ENCODE measurements at regions of chr5 and their contacts with region 1.

Region 1: DNA sequence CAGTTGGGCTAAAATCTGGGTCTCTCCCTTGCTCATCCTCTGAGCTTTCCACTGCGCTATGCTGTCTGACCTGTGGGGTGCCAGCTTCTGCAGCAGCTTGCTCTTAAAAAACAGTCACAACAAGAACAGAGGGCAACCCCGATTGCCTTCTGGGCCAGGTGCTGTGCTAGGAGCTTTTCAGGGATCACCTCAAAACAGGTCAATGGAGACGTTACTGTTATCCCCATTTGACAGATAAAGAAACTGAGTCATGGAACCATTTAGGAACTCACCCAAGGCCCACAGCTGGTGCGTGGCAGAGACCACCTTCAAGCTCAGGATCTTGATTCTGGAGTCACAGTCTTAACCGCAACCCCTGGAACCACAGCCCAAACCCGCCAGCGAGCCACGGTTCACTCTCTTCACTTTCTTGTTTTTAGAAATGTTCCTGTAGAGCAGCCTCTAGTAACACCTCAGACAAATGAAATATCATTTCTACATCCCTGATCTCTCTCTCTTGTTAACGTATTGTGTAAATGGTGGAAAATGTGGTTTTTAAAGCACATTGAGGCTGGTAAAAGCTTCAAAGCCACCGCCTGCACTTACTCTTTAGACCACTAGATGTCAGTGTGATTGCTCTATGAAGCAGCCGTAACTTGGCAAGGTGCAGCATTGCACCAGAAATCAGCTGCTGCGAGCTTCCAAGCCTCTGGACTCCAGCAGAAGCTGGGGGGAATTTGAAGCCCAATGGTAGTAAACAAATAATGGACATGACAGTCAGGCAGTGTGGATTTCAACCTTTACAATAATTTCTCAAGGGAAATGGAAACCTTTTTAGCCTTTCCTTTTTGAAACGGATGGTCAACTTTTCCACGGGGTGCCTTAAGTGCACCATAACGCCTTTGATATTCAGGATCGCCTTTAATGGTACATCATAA is 1.7 kb downstream of the FYB1 start:
- DNase-seq: peak; percentile 79
- H3K4me3 Mint-ChIP-seq: peak overlapping the region; percentile 74
- H3K27ac Mint-ChIP-seq: peak overlapping the region; percentile 78
- H3K4me1 Mint-ChIP-seq: peaks cover 57% of the 10 kb centered on the region
- H3K27me3 Mint-ChIP-seq: no peaks in the 10 kb centered on the region

Region 2: GRCh38 chr5:38776149-38776896 is 441.3 kb before region 1 on chr5:
- CTCF ChIA-PET with region 1: no interaction called
- POLR2A ChIA-PET with region 1: no interaction called
- DNase-seq: no peak
- H3K4me3 Mint-ChIP-seq: no peak overlapping the region
- H3K27ac Mint-ChIP-seq: no peak overlapping the region
- H3K4me1 Mint-ChIP-seq: no peaks in the 10 kb centered on the region
- H3K27me3 Mint-ChIP-seq: peaks cover 6% of the 10 kb centered on the region

Region 3: DNA sequence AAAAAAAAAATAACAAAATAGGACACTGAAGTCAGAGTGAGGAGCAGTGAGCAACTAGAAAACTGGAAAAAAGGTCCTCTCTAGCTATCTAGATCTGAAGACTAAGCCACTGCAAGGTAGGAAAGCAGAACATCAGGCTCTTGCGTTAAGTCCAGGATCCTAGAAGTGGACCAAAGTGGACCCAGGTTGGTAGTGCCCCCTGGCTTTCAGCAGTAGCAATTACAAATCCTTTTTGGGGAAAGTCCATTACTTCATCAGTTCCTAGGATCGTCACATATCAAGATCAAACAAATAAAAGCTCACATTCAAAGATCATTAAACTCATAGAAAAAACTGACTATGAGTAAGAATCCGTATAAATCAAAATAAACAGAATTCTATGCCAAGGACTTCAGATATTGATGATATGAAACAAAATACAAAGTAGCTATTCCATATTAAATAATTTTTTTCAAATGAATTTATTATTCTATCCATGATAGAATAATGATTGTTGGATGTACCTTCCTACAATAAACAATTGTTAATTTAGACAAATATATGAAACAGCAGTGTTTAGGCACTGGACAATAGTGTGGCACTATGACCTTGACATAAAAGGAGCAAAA is 136.9 kb before region 1 on chr5:
- CTCF ChIA-PET with region 1: interaction called, 12 read pairs
- POLR2A ChIA-PET with region 1: interaction called, 31 read pairs
- DNase-seq: peak; percentile 46
- H3K4me3 Mint-ChIP-seq: no peak overlapping the region
- H3K27ac Mint-ChIP-seq: no peak overlapping the region
- H3K4me1 Mint-ChIP-seq: peaks cover 25% of the 10 kb centered on the region
- H3K27me3 Mint-ChIP-seq: peaks cover 33% of the 10 kb centered on the region

Region 4: DNA sequence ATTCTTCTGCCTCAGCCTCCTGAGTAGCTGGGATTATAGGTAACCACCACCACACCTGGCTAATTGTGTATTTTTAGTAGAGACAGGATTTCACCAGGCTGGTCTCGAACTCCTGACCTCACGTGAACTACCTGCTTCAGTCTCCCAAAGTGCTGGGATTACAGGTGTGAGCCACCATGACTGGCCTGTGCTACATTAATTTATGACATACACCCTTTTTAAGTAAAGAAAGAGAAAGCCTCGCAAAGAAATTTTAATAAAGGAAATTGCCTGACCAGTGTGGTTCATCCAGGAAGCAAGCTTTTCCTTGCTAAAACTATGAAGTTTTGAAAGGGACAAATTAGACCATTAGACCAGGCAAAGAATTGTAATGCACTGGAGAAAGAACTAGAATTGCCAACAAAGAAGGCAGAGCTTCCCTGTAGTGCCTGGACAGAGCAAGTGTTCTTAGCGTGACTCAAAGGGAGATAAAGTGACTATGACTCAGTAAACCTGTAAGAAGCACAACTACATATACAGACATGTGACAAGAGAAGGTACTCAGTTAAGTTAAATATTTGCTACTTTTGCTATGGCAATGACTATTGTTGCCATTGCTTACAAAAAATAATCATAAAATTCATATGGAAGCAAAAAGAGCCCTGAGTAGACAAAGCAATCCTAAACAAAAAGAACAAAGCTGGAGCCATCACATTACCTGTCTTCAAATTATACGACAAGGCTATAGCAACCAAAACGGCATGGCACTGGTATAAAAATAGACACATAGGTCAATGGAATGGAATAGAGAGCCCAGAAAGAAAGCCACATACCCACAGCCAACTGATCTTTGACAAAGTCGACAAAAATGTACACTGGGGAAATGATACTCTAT is 52.9 kb before region 1 on chr5:
- CTCF ChIA-PET with region 1: interaction called, 27 read pairs
- POLR2A ChIA-PET with region 1: interaction called, 36 read pairs
- DNase-seq: no peak
- H3K4me3 Mint-ChIP-seq: peak overlapping the region; percentile 60
- H3K27ac Mint-ChIP-seq: peak overlapping the region; percentile 79
- H3K4me1 Mint-ChIP-seq: peaks cover 85% of the 10 kb centered on the region
- H3K27me3 Mint-ChIP-seq: no peaks in the 10 kb centered on the region

Region 5: DNA sequence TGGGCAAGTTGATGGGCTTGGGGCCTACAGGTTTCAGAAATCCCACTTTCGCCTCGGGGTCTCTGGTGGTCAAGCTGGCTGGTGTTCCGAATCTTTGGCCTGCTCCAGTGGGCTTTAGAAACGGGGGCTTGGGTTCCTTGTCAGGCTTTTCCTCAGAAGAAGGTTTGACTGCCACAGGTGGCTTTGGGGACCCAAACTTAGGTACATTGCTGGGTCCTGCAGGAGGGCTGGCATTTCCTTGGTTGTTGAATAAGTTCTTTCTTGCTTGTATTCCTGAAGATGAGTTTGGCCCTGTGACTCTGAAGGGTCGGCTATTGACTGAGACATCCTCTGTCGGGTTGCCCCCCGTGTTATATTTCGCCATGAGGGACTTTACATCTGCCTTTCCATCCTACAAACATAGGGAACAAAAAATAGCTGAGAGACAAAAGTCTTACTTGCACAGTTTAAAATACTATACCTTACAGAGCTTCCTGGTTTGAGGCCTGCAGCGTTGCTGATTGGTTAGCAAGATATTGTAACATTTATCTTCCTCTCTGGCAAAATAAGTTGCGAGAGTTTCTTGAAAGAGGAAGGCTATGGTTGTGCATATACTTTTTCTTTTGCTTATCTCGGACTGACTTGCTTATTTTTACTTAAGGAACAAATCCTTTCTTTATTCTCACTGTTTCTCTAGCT is 14.9 kb before region 1 on chr5:
- CTCF ChIA-PET with region 1: interaction called, 37 read pairs
- POLR2A ChIA-PET with region 1: interaction called, 238 read pairs
- DNase-seq: peak; percentile 62
- H3K4me3 Mint-ChIP-seq: peak overlapping the region; percentile 96
- H3K27ac Mint-ChIP-seq: peak overlapping the region; percentile 97
- H3K4me1 Mint-ChIP-seq: peaks cover 40% of the 10 kb centered on the region
- H3K27me3 Mint-ChIP-seq: no peaks in the 10 kb centered on the region

Region 6: DNA sequence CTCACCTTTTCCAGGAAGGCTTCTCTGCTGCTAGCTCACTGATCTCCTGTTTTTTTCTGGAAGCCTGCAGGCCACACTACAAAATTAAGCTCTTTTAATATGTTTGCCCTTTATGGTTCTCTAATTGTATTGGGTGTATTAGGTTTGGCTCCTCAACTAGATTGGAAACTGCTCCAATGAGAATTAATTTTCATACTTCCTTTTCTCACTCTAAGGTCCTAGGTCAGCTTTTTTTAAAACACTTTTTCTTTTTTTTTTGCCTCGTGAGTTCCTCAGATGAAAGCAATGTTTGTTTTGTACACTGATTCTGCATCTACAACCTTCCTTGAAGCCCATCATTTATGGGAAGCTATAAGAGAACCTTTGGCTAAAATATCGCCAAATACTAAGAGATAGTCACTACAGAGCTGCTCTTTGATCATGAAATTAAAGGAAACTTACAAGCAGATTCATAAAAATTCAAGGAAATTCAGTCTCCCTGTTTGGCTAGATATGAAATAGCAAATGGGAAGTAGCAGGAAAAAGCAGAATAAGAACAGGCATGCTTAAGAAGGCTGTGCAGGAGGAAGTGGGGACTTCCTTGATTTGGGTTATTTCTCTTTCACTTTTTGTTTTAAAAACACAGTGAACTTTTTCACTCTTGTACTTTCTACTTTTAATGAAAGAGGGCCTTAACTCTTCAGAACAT is 56.9 kb after region 1 on chr5:
- CTCF ChIA-PET with region 1: interaction called, 126 read pairs
- POLR2A ChIA-PET with region 1: interaction called, 24 read pairs
- DNase-seq: no peak
- H3K4me3 Mint-ChIP-seq: peak overlapping the region; percentile 72
- H3K27ac Mint-ChIP-seq: peak overlapping the region; percentile 89
- H3K4me1 Mint-ChIP-seq: peaks cover 47% of the 10 kb centered on the region
- H3K27me3 Mint-ChIP-seq: no peaks in the 10 kb centered on the region

Region 7: GRCh38 chr5:39469777-39470415 is 252.3 kb after region 1 on chr5:
- CTCF ChIA-PET with region 1: no interaction called
- POLR2A ChIA-PET with region 1: no interaction called
- DNase-seq: no peak
- H3K4me3 Mint-ChIP-seq: no peak overlapping the region
- H3K27ac Mint-ChIP-seq: no peak overlapping the region
- H3K4me1 Mint-ChIP-seq: no peaks in the 10 kb centered on the region
- H3K27me3 Mint-ChIP-seq: peaks cover 3% of the 10 kb centered on the region

Region 8: DNA sequence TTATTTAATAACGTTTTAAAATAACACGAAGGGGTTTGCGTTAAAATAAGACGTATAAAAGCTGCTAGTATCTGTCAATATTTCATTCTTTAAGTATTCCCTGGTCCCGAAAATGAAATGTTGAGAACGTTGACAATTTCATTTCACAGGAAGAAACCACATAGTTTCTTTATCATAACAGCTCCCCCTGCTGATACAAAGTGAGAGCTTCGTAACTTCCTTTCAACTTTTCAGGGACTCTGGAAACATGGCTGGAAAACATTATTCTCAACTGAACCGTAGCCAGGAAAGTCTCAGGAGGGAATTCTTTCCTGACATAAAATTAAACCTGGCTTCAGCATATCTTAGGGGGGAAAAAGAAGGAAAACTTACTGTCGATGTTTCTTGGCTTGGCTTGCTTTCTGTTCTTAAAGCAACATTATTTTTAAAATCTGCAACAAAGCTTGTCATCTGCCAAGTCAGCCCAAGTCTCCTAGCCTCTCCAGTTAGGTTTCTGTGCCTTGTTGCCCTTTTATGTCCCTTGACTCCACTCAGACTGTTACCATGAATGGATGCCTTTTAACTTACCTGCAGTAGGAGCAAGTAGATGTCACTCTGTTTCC is 330.0 kb after region 1 on chr5:
- CTCF ChIA-PET with region 1: interaction called, 15 read pairs
- POLR2A ChIA-PET with region 1: interaction called, 4 read pairs
- DNase-seq: no peak
- H3K4me3 Mint-ChIP-seq: no peak overlapping the region
- H3K27ac Mint-ChIP-seq: no peak overlapping the region
- H3K4me1 Mint-ChIP-seq: peaks cover 1% of the 10 kb centered on the region
- H3K27me3 Mint-ChIP-seq: peaks cover 10% of the 10 kb centered on the region

Measured in activated CD4-positive, alpha-beta memory T cell treated with anti-CD3 and anti-CD28 coated beads, Interleukin-2, amount 10 ng/mL, durations not matched to agents 7 days and 5 days (primary cell).